Prostate gland (tissue), 2 donors: ENCODE measurements at regions of chr9 and their contacts with region 1.

Region 1: GRCh38 chr9:82606492-82607382 is 456.2 kb downstream of the RASEF start:
- DNase-seq: peak; percentile 32
- H3K4me3 ChIP-seq: no peak overlapping the region
- H3K27ac ChIP-seq: no peak overlapping the region
- H3K4me1 ChIP-seq: peaks cover 5% of the 10 kb centered on the region
- H3K27me3 ChIP-seq: no peaks in the 10 kb centered on the region
- CTCF ChIP-seq: peak in 3 of 4 experiments; percentile 46 to 61 (median 60)
- POLR2A ChIP-seq: no peak

Region 2: DNA sequence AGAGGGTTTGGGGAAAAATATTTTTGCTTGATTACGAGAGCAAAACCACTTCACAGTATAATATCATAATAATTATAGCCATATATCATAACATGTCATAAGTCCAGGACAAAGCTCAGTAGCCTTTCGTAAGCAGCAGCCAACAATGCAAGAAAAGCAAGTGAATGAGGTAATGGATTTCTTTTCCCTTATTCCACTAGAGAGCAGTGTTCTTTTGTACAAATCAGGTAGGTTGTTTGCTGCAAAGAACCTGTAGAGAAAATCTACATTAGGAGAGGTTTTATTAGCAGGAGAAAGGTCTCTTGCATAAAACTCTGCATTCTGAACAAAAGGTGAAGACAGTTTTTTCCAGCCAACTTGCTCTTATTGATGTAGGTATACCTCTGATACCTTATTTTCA is 2001.6 kb before region 1 on chr9:
- intact Hi-C with region 1: loop called (anchors 10 kb)
- DNase-seq: no peak
- H3K4me3 ChIP-seq: no peak overlapping the region
- H3K27ac ChIP-seq: no peak overlapping the region
- H3K4me1 ChIP-seq: no peaks in the 10 kb centered on the region
- H3K27me3 ChIP-seq: no peaks in the 10 kb centered on the region
- CTCF ChIP-seq: peak in 3 of 4 experiments; percentile 25 to 34 (median 31)
- POLR2A ChIP-seq: no peak

Region 3: DNA sequence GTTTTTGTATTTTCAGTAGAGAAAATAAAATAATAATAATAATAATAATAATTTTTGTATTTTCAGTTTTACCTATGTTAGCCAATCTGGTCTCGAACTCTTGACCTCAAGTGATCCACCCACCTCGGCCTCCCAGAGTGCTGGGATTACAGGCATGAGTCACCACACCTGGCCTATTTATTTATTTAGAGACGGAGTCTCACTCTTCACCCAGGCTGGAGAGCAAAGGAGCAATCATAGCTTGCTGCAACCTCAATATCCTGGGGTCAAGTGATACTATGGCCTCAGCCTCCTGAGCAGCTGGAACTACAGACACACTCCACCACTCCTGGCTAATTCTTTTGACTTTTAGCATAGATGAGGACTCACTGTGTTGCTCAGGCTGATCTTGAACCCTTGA is 1084.8 kb before region 1 on chr9:
- intact Hi-C with region 1: loop called (anchors 10 kb)
- DNase-seq: no peak
- H3K4me3 ChIP-seq: no peak overlapping the region
- H3K27ac ChIP-seq: no peak overlapping the region
- H3K4me1 ChIP-seq: no peaks in the 10 kb centered on the region
- H3K27me3 ChIP-seq: no peaks in the 10 kb centered on the region
- CTCF ChIP-seq: no peak
- POLR2A ChIP-seq: no peak

Region 4: GRCh38 chr9:81848472-81848871 is 758.3 kb before region 1 on chr9:
- intact Hi-C with region 1: loop called (anchors 10 kb)
- DNase-seq: no peak
- H3K4me3 ChIP-seq: no peak overlapping the region
- H3K27ac ChIP-seq: no peak overlapping the region
- H3K4me1 ChIP-seq: no peaks in the 10 kb centered on the region
- H3K27me3 ChIP-seq: no peaks in the 10 kb centered on the region
- CTCF ChIP-seq: peak in 3 of 4 experiments; percentile 29 to 43 (median 40)
- POLR2A ChIP-seq: no peak

Region 5: GRCh38 chr9:82488313-82489200 is 118.2 kb before region 1 on chr9:
- intact Hi-C with region 1: no loop called
- DNase-seq: peak; percentile 69
- H3K4me3 ChIP-seq: no peak overlapping the region
- H3K27ac ChIP-seq: peak overlapping the region; percentile 19 to 58
- H3K4me1 ChIP-seq: no peaks in the 10 kb centered on the region
- H3K27me3 ChIP-seq: no peaks in the 10 kb centered on the region
- CTCF ChIP-seq: no peak
- POLR2A ChIP-seq: no peak

Region 6: DNA sequence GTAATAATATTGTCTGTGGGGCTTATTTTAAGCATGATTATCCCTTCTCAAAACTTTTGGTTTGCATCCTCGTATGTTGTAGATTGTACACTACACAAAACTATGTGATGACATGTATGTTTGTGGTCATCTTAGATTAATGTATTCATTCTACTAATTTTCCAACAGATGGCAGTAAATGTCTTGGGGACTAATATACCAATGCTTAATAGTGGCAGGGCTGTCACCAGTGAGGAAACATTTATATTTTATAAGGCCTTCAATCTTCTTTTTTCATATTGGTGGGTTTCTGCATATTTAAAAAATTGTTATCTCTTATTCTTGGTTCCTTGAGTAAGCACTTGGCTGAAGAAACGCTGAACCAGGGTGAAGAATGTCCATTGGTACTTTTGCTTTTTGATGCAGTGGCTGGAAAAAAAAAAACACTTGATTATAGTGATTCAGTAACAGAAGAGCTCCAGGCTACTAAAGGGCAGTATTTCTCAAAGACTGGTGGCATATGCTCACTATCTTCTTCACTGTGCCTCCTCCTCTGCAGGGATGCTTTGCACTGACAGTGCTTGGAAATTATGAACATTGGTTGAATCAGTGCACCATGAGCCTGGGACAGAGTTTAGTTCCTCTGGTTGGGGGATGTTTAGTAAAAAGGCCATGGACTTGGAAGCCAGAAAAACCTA is 74.1 kb before region 1 on chr9:
- intact Hi-C with region 1: loop called (anchors 5 kb)
- DNase-seq: no peak
- H3K4me3 ChIP-seq: no peak overlapping the region
- H3K27ac ChIP-seq: no peak overlapping the region
- H3K4me1 ChIP-seq: no peaks in the 10 kb centered on the region
- H3K27me3 ChIP-seq: no peaks in the 10 kb centered on the region
- CTCF ChIP-seq: peak in 3 of 4 experiments; percentile 45 to 59 (median 54)
- POLR2A ChIP-seq: no peak

Region 7: DNA sequence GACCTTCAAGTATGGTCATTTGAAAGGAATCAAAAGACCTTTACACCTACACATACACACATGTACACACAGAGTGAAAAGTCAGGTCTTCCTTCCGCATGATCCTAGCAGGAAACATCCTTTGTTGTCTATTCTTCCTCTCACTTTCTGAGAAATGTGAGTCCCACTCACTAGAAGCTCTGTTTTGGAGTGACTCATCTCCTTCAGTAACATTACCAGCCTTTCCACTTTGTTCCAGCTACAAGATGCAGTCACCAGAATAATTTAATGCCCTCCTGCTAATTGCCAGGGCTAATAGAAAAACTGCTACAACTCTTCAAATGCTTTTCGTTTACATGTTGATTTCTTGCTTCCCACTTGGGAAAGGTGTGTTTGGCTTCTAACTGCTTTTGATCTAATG is 38.9 kb after region 1 on chr9:
- intact Hi-C with region 1: no loop called
- DNase-seq: no peak
- H3K4me3 ChIP-seq: no peak overlapping the region
- H3K27ac ChIP-seq: no peak overlapping the region
- H3K4me1 ChIP-seq: no peaks in the 10 kb centered on the region
- H3K27me3 ChIP-seq: no peaks in the 10 kb centered on the region
- CTCF ChIP-seq: no peak
- POLR2A ChIP-seq: no peak

Region 8: DNA sequence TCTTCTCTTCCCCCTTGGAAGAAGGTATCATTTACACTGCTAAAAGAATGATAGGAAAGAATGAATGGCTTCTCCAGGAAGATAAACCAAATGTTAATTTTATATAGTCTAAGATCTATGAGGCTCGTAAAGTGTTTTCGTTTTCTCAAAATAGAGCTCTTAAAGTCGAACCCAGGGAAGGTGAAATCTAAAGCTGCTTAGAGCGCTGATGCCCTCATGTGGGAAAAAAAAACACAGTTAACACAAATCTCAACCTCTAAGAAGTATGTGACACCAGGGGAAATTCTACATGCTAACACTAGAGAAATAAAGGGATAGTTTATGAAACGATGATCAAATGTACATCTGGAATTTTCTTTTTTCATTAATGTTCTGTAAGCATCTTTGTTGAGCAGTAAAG is 198.3 kb after region 1 on chr9:
- intact Hi-C with region 1: no loop called
- DNase-seq: no peak
- H3K4me3 ChIP-seq: no peak overlapping the region
- H3K27ac ChIP-seq: no peak overlapping the region
- H3K4me1 ChIP-seq: no peaks in the 10 kb centered on the region
- H3K27me3 ChIP-seq: no peaks in the 10 kb centered on the region
- CTCF ChIP-seq: no peak
- POLR2A ChIP-seq: no peak